ENCODE measurements at regions of chr21 and their contacts with region 1.

Region 1: DNA sequence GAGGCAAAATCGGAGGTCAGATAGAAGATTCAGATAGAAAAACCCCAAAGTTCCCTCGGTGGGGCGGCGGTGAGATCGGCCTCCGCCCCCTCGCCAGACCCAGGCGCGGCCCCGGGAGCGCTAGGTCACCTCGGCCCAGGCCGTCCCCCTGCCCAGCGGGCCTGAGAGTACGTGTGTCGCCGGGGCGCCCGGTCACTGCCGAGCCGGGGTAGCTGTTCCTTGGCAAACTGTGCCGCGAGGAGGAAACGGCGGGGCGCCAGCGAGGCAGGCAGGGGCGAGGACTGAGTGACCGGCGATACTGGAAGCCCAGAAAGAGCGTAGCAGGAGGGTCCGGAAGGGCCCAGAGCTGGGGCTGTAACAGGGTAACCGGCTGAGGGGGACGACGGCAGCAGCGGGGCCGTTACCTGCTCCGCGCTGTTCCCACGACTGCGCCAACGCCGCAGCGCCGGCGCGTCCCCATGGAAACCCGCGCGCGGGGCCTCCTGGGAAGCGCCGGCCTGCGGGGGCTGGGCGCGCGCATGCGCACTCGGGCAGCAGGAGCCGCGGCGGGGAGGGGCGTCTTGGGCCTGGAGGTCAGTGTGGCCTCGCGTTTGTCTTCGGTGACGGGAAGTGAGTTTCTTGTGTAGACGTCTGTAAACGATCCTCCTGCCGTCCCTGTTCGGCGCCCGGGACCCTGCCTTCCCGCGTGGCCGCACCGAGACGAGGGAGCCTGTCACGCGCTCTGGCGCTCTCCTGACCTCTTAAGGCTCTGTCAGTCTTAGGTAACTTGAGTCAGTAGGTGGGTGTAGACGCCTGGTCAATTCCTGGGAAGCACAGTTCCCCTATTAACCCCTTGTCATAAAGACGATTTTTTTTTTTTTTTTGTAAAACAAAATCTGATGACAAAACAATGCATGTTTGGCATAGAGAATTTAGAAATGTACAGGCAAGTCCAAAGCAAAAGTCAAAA is at the start of gene LCA5L:
- DNase-seq: peak; percentile 76 to 96 (median 86)
- ATAC-seq: peak; percentile 93
- H3K4me3 ChIP-seq: peak within 1 kb of the TSS; percentile 71
- H3K4me3 Mint-ChIP-seq: peak within 1 kb of the TSS; percentile 92
- H3K27ac ChIP-seq: peak within 1 kb of the TSS; percentile 68 to 74
- H3K27ac Mint-ChIP-seq: peak within 1 kb of the TSS; percentile 91
- H3K4me1 ChIP-seq: peaks cover 11% of the 10 kb centered on the region
- H3K4me1 Mint-ChIP-seq: peaks cover 15% of the 10 kb centered on the region
- H3K27me3 ChIP-seq: no peaks in the 10 kb centered on the region
- H3K27me3 Mint-ChIP-seq: peaks cover 16% of the 10 kb centered on the region
- CTCF ChIP-seq: no peak
- total RNA-seq, gene LCA5L: 0.17 TPM in 1 of 2 experiments, not detected in the other

Region 2: GRCh38 chr21:38805328-38806152 is 640.1 kb before region 1 on chr21 and contains the start of gene ETS2:
- CTCF ChIA-PET with region 1: no interaction called
- POLR2A ChIA-PET with region 1: no interaction called
- intact Hi-C with region 1: loop called in 1 of 2 experiments (anchors 10 kb)
- DNase-seq: peak; percentile 37 to 86 (median 64)
- ATAC-seq: peak; percentile 80
- H3K4me3 ChIP-seq: peak within 1 kb of the TSS; percentile 62
- H3K4me3 Mint-ChIP-seq: peak within 1 kb of the TSS; percentile 90
- H3K27ac ChIP-seq: peak within 1 kb of the TSS; percentile 25 to 37
- H3K27ac Mint-ChIP-seq: peak within 1 kb of the TSS; percentile 64
- H3K4me1 ChIP-seq: peaks cover 17% of the 10 kb centered on the region
- H3K4me1 Mint-ChIP-seq: peaks cover 39% of the 10 kb centered on the region
- H3K27me3 ChIP-seq: no peaks in the 10 kb centered on the region
- H3K27me3 Mint-ChIP-seq: no peaks in the 10 kb centered on the region
- CTCF ChIP-seq: peak; percentile 5
- total RNA-seq, gene ETS2: 11.4 to 13.9 TPM

Region 3: DNA sequence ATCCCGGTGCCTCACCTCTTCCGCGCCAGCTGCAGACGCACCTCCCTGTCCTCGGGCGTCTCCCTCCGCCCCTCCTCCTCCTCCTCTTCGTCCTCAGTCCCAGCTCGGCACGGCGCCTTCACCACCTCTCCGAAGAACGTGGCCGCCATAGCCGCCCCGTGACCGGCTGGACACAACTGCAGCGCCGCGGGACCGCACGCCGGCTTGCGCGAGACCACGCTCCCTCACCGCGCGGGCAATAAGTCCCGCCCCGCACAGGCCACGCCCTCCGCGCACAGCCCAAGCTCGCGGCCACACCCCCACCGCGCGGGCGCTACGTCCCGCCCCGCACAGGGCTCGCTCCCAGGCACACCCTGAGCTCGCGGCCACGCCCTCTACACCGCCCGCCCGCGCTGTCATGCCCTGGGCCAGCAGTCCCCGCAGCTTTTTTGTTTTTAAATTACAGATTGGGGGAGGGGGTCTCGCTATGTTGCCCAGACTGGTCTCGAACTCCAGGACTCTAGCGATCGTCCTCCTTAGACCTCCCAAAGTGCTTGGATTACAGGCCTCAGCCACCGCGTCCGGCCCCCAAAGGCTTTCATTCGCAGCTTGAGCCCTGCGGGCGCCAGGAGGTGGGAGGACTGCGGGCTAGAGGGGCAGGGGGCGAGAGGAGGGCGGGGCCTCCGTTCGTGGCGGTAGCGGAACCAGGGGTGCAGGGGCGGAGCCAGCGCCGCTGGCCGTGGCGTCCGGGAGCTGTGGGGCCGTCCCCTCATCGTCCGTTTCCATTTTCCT is 262.2 kb before region 1 on chr21 and contains the start of gene PSMG1:
- CTCF ChIA-PET with region 1: interaction called, 3 read pairs
- POLR2A ChIA-PET with region 1: no interaction called
- intact Hi-C with region 1: loop called in 1 of 2 experiments (anchors 5 kb)
- DNase-seq: peak; percentile 86 to 97 (median 92)
- ATAC-seq: peak; percentile 92
- H3K4me3 ChIP-seq: peak within 1 kb of the TSS; percentile 87
- H3K4me3 Mint-ChIP-seq: peak within 1 kb of the TSS; percentile 91
- H3K27ac ChIP-seq: peak within 1 kb of the TSS; percentile 81 to 92
- H3K27ac Mint-ChIP-seq: peak within 1 kb of the TSS; percentile 91
- H3K4me1 ChIP-seq: peaks cover 18% of the 10 kb centered on the region
- H3K4me1 Mint-ChIP-seq: peaks cover 76% of the 10 kb centered on the region
- H3K27me3 ChIP-seq: no peaks in the 10 kb centered on the region
- H3K27me3 Mint-ChIP-seq: no peaks in the 10 kb centered on the region
- CTCF ChIP-seq: no peak
- total RNA-seq, gene PSMG1: 7.8 to 7.9 TPM

Region 4: GRCh38 chr21:39313571-39314142 is 131.9 kb before region 1 on chr21 and contains the start of gene BRWD1:
- CTCF ChIA-PET with region 1: interaction called, 5 read pairs
- POLR2A ChIA-PET with region 1: interaction called, 5 read pairs
- intact Hi-C with region 1: loop called (anchors 5 to 10 kb)
- DNase-seq: peak; percentile 68 to 92 (median 75)
- ATAC-seq: peak; percentile 27
- H3K4me3 ChIP-seq: peak within 1 kb of the TSS; percentile 79
- H3K4me3 Mint-ChIP-seq: peak within 1 kb of the TSS; percentile 95
- H3K27ac ChIP-seq: peak within 1 kb of the TSS; percentile 55 to 85
- H3K27ac Mint-ChIP-seq: peak within 1 kb of the TSS; percentile 93
- H3K4me1 ChIP-seq: peaks cover 31% of the 10 kb centered on the region
- H3K4me1 Mint-ChIP-seq: peaks cover 50% of the 10 kb centered on the region
- H3K27me3 ChIP-seq: no peaks in the 10 kb centered on the region
- H3K27me3 Mint-ChIP-seq: no peaks in the 10 kb centered on the region
- CTCF ChIP-seq: no peak
- total RNA-seq, gene BRWD1: 84.7 to 92.2 TPM

Region 5: GRCh38 chr21:39373644-39374043 is 72.0 kb before region 1 on chr21:
- CTCF ChIA-PET with region 1: no interaction called
- POLR2A ChIA-PET with region 1: no interaction called
- intact Hi-C with region 1: loop called in 1 of 2 experiments (anchors 1 kb)
- DNase-seq: peak in 3 of 14 experiments; percentile 15 to 56 (median 54)
- ATAC-seq: peak; percentile 83
- H3K4me3 ChIP-seq: no peak overlapping the region
- H3K4me3 Mint-ChIP-seq: no peak overlapping the region
- H3K27ac ChIP-seq: no peak overlapping the region
- H3K27ac Mint-ChIP-seq: no peak overlapping the region
- H3K4me1 ChIP-seq: no peaks in the 10 kb centered on the region
- H3K4me1 Mint-ChIP-seq: no peaks in the 10 kb centered on the region
- H3K27me3 ChIP-seq: peaks cover 0 to 2% of the 10 kb centered on the region in 2 experiments
- H3K27me3 Mint-ChIP-seq: no peaks in the 10 kb centered on the region
- CTCF ChIP-seq: no peak

Region 6: GRCh38 chr21:40120940-40121575 is 675.5 kb after region 1 on chr21:
- CTCF ChIA-PET with region 1: no interaction called
- POLR2A ChIA-PET with region 1: no interaction called
- intact Hi-C with region 1: no loop called
- DNase-seq: no peak
- ATAC-seq: no peak
- H3K4me3 ChIP-seq: no peak overlapping the region
- H3K4me3 Mint-ChIP-seq: no peak overlapping the region
- H3K27ac ChIP-seq: no peak overlapping the region
- H3K27ac Mint-ChIP-seq: no peak overlapping the region
- H3K4me1 ChIP-seq: no peaks in the 10 kb centered on the region
- H3K4me1 Mint-ChIP-seq: no peaks in the 10 kb centered on the region
- H3K27me3 ChIP-seq: no peaks in the 10 kb centered on the region
- H3K27me3 Mint-ChIP-seq: no peaks in the 10 kb centered on the region
- CTCF ChIP-seq: no peak

Region 7: DNA sequence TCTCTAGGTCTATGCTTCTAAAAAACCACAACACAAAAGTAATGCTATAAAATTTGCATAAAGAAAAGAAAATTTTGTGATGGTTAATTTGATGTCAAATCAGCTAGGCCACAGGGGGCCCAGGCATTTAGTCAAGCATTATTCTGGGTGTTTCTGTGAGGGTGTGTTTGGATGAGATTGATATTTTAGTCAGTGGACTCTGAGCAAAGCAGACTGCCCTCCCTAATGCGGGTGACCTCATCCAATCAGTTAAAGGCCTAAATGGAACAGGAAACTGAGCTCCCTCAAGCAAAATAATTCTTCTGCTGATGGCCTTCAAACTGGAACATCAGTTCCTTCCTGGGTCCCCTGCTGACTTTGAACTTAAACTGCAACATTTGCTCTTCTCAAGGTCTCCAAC is 1043.4 kb after region 1 on chr21:
- CTCF ChIA-PET with region 1: no interaction called
- POLR2A ChIA-PET with region 1: no interaction called
- intact Hi-C with region 1: no loop called
- DNase-seq: no peak
- ATAC-seq: no peak
- H3K4me3 ChIP-seq: no peak overlapping the region
- H3K4me3 Mint-ChIP-seq: no peak overlapping the region
- H3K27ac ChIP-seq: no peak overlapping the region
- H3K27ac Mint-ChIP-seq: no peak overlapping the region
- H3K4me1 ChIP-seq: no peaks in the 10 kb centered on the region
- H3K4me1 Mint-ChIP-seq: no peaks in the 10 kb centered on the region
- H3K27me3 ChIP-seq: no peaks in the 10 kb centered on the region
- H3K27me3 Mint-ChIP-seq: no peaks in the 10 kb centered on the region
- CTCF ChIP-seq: no peak

Measured in CD4-positive, alpha-beta T cell (primary cell).